Naive thymus-derived CD4-positive, alpha-beta T cell (primary cell): ENCODE measurements at regions of chr6 and their contacts with region 1.

Region 1: DNA sequence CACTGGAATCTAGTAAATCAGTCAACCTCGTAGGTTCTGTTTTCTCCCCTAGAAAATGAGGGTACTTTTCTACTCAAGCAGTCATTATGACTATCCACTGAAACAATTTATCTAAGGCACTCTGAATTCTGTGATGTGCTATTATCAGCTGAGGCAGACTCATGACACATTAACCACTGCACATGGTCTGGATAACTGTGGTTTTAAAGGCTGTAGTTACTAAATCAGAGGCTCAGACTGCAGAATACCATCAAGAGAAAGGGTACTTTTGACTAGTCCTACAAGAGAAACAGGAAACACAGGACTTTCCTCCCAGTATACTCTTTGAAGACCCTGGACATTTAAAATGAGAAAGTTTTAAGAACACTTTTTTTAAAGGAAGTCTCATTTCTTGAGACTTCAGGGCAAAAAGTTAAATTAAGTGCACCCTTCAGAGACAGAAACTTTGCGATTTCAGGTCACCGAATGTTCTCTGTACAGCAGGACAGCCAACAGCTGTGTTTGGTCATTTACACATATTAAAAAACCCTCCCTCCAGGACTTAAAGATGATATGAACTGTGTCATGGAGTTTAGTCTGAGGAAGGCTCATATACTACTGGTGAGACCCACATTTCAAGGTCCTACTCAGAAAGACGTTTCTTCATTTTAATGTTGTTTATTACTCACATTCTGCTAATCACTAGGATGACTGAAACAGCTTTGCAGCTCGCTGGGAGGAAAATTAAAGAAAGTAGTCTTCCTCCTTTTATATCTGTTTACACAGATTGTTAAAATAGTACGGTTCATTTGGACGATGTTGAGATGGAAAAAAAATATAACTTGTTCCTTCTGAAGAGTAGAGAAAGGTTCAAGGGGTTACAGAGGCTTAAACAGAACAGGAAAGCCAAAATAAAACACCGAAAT is 19.9 kb downstream of the ATXN1 start:
- DNase-seq: no peak
- ATAC-seq: peak; percentile 72
- H3K4me3 ChIP-seq: no peak overlapping the region
- H3K4me3 Mint-ChIP-seq: no peak overlapping the region
- H3K27ac ChIP-seq: no peak overlapping the region
- H3K27ac Mint-ChIP-seq: peak overlapping the region in 1 of 9 donors; percentile 43
- H3K4me1 ChIP-seq: peaks cover 0 to 16% of the 10 kb centered on the region in 2 donors
- H3K4me1 Mint-ChIP-seq: peaks cover 20 to 66% (median 33%) of the 10 kb centered on the region in 7 donors
- H3K27me3 ChIP-seq: no peaks in the 10 kb centered on the region
- H3K27me3 Mint-ChIP-seq: no peaks in the 10 kb centered on the region

Region 2: GRCh38 chr6:16752236-16752867 is 11.0 kb after region 1 on chr6:
- CTCF ChIA-PET with region 1: interaction called, 10 read pairs
- POLR2A ChIA-PET with region 1: interaction called, 4 read pairs
- intact Hi-C with region 1: no loop called
- DNase-seq: no peak
- ATAC-seq: peak; percentile 80
- H3K4me3 ChIP-seq: no peak overlapping the region
- H3K4me3 Mint-ChIP-seq: no peak overlapping the region
- H3K27ac ChIP-seq: no peak overlapping the region
- H3K27ac Mint-ChIP-seq: no peak overlapping the region
- H3K4me1 ChIP-seq: peaks cover 0 to 18% of the 10 kb centered on the region in 2 donors
- H3K4me1 Mint-ChIP-seq: peaks cover 0 to 60% (median 22%) of the 10 kb centered on the region in 7 donors
- H3K27me3 ChIP-seq: no peaks in the 10 kb centered on the region
- H3K27me3 Mint-ChIP-seq: no peaks in the 10 kb centered on the region

Region 3: DNA sequence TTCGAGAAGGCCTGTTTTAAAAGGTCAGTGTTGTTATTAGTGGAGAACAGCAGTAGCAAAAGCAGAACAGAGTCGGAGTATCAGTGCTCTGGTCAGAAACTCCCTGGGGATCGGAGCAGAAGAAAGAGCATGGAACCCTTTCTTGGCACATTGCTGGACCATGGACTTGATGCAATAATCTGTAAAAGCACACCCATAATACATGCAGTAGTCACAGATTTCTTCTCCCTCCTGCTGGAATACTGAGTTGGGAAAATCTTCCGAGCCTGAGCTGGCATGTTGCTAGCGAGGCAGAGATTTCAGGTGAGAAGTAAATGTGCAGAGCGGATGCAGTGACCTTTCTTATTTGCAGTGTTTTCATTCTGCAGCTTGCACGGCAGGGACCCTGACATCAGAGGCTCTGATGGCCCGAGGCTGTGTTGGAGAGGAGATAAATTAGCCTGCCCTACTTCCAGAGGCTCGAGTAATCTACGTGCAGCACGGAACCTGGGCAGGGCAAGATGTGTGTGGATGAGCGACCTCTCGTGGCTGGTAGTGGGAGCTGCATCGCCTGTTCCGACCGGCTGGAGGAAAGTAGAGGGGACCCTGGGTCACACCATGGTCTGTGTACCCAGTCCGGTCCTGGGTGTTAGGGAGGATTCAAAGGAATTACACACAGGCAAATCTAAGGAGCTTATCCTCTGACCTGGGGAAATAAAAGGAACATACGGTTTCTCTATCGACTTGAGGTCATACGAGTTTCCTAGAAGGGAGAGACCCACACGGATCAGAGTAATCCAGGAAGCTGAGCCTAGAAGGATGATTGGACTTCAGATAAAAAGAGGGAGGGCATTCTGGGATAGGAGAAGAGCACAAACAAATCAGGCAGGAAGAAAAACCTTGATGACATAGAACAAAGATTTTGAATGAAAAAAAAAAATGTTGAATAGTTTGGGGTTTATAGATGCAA is 223.5 kb after region 1 on chr6:
- CTCF ChIA-PET with region 1: interaction called, 3 read pairs
- POLR2A ChIA-PET with region 1: no interaction called
- intact Hi-C with region 1: loop called in 1 of 2 experiments (anchors 1 kb)
- DNase-seq: peak in 8 of 9 donors; percentile 8 to 66 (median 24)
- ATAC-seq: peak; percentile 90
- H3K4me3 ChIP-seq: peak overlapping the region; percentile 2
- H3K4me3 Mint-ChIP-seq: peak overlapping the region in 1 of 10 donors; percentile 5
- H3K27ac ChIP-seq: no peak overlapping the region
- H3K27ac Mint-ChIP-seq: no peak overlapping the region
- H3K4me1 ChIP-seq: no peaks in the 10 kb centered on the region
- H3K4me1 Mint-ChIP-seq: peaks cover 4 to 10% (median 5%) of the 10 kb centered on the region in 7 donors
- H3K27me3 ChIP-seq: no peaks in the 10 kb centered on the region
- H3K27me3 Mint-ChIP-seq: peaks cover 13 to 28% (median 24%) of the 10 kb centered on the region in 5 donors